ENCODE measurements at regions of chr7 and their contacts with region 1.

Region 1: GRCh38 chr7:115229401-115230105 is 307.7 kb downstream of the MDFIC start:
- DNase-seq: no peak
- H3K4me3 ChIP-seq: no peak overlapping the region
- H3K27ac ChIP-seq: no peak overlapping the region
- H3K4me1 ChIP-seq: no peaks in the 10 kb centered on the region
- H3K27me3 ChIP-seq: no peaks in the 10 kb centered on the region
- CTCF ChIP-seq: no peak
- POLR2A ChIP-seq: no peak

Region 2: DNA sequence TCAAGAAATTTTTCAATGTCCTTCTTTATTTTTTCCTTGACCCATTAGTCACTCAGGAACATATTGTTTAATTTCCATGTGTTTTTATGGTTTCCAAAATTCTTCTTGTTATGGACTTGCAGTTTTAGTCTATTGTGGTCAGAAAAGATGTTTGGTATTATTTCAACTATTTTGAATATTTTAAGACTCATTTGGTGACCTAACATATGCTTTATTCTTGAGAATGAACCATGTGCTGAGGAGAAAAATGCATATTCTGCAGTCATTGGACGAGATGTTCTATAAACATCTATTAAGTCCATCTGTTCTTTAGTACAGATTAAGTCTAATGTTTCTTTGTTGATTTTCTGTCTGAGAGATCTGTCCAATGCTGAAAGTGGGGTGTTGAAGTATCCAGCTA is 350.0 kb before region 1 on chr7:
- intact Hi-C with region 1: loop called (anchors 10 kb)
- DNase-seq: no peak
- H3K4me3 ChIP-seq: no peak overlapping the region
- H3K27ac ChIP-seq: no peak overlapping the region
- H3K4me1 ChIP-seq: peaks cover 0 to 3% of the 10 kb centered on the region in 2 donors
- H3K27me3 ChIP-seq: no peaks in the 10 kb centered on the region
- CTCF ChIP-seq: no peak
- POLR2A ChIP-seq: no peak

Region 3: GRCh38 chr7:115198143-115198542 is 31.4 kb before region 1 on chr7:
- intact Hi-C with region 1: no loop called
- DNase-seq: no peak
- H3K4me3 ChIP-seq: no peak overlapping the region
- H3K27ac ChIP-seq: no peak overlapping the region
- H3K4me1 ChIP-seq: no peaks in the 10 kb centered on the region
- H3K27me3 ChIP-seq: no peaks in the 10 kb centered on the region
- CTCF ChIP-seq: no peak
- POLR2A ChIP-seq: no peak

Region 4: DNA sequence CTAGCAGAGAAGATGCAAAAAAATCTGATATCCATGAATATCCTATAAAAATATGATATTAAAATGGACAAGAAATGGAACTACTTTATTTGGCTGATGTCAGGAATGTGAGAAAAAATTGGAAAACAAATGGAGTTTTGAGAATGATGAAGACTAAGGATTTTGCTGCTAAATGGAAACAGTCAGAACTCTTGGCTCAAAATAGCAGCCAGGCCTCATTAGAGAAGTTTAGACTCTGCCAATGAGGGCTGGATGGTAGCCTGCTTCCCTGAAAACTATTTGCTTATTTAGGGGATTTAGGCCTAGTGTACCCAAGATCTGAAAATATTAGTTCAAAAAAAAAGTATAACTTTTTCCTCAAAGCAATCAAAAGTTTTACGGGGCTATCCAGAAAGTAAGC is 342.6 kb after region 1 on chr7:
- intact Hi-C with region 1: no loop called
- DNase-seq: no peak
- H3K4me3 ChIP-seq: no peak overlapping the region
- H3K27ac ChIP-seq: no peak overlapping the region
- H3K4me1 ChIP-seq: no peaks in the 10 kb centered on the region
- H3K27me3 ChIP-seq: no peaks in the 10 kb centered on the region
- CTCF ChIP-seq: no peak
- POLR2A ChIP-seq: no peak